ENCODE measurements at regions of chr10 and their contacts with region 1.

Region 1: GRCh38 chr10:58384999-58385783 is at the start of gene TFAM:
- DNase-seq: peak; percentile 94
- CTCF ChIP-seq: peak; percentile 80

Region 2: DNA sequence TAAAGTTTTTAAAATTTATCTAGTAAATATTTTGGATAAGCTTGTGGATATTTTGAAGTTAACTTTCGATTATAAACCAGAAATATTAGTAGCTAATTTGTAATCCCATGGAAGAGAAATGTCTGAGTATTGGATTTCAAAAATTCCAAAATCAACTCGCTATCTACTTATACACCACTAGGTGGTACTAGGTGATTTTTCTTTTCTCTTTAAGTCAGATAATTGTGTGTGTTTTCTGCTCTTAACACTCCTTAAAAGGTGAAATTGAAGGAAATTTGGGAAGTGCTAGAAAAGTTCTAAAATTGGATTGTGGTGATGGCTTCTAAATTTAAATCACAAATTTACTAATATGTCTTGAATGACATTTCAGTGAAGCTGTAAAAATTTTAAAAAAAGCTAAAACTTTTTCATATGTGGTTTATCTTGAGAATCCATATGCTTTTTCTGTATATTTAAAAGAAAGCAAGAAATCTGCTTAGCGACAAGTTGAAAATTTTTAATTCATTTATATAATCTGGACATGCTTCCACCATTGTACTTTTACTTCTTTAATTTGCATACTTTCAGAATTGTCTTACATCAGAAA is 207.7 kb before region 1 on chr10:
- in situ Hi-C with region 1: loop called (anchors 25 kb)
- DNase-seq: peak; percentile 19
- CTCF ChIP-seq: no peak

Region 3: DNA sequence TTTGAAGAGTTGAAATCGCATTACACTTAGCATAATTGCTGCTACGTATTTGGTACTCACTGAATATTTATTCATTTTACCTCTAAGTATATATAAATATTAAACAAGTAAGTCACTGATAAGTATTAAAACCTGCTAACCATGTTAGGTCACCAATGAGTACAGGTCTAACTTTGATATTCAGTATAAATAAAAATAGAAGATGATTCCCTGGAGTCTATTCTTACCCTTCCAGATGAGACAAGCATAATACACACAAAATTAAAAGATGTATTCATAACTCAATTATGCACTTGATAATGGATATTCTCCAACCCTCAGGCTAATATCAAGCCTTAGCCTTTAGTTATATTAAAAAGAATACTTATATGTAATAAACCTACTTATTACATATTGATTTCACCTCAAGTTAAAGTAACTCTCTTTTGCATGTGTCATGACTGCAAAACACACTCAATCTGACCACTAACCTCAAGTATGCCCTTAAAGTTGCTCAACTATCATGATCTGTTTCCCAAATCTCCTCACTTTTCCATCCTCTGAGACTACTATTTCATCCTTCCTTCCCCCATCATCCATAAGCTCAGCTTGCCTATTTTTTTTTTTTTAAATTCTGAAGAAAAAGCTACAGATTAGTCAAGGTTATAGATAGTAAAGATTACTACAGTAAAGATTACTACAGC is 164.3 kb before region 1 on chr10:
- in situ Hi-C with region 1: no loop called
- DNase-seq: no peak
- CTCF ChIP-seq: no peak

Region 4: DNA sequence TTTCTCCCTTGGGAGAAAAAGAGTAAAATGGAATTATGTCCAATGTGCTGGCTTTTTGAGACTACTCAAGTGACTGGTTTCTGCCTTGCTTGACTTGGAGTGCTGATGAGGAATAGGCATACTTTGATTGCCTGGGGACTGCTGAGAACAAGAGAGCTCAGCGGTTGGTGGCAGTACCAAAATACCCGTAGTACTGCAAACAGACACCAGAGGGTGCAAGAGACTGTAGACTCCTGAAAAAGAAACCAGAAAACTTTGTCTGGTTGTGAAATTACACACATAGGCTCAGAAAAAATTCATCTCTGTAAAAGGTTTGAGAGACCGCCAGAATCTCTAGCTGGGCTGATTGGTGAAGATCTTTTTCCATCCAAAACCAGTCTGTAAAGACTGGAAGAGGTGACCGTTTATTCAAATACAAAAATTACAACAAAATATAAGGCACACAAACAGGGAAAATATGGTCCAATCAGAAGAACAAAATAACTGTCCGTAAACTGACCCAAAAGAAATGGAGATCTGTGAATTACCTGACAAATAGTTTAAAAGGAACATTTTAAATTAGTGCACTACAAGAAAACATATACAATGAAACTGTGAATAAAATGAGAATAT is 146.0 kb after region 1 on chr10:
- in situ Hi-C with region 1: no loop called
- DNase-seq: no peak
- CTCF ChIP-seq: peak; percentile 61